Mammary epithelial cell (primary cell): ENCODE measurements at regions of chr21 and their contacts with region 1.

Region 1: DNA sequence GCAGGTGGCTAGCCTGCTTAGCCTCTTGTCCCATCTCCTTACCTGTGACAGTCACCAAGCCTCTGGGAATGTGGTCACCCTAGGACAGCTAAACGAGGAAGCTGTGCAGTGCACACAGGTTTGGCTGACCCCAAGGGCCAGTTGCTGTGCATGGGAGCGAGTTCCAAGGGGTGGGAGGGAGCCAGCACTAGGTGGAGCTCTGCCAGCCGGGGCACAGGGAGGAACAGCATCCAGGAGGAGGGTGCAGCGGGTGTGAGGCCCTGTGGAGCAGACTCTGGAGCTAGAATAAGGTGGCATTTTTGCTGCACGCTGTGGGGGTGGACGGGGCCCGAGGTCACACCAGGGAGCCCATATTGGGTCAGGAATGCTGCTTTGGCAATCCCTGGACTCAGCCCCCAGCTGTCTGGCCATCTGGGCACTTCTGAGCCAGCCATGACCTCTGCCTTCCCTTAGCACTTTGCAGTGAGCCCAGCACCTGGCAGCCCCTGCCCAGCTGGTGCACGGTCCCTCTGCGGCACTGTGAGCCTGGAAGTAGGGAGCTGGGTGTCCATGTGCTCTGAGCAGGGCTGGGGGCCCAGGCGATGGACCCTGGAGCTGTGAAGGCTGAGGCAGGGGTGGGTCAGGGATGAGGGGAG is 8.7 kb downstream of the PDXK start:
- DNase-seq: no peak
- H3K4me3 ChIP-seq: no peak overlapping the region
- H3K27ac ChIP-seq: peak overlapping the region; percentile 56
- H3K4me1 ChIP-seq: peaks cover 62% of the 10 kb centered on the region
- H3K27me3 ChIP-seq: no peaks in the 10 kb centered on the region
- CTCF ChIP-seq: peak; percentile 16 to 26

Region 2: DNA sequence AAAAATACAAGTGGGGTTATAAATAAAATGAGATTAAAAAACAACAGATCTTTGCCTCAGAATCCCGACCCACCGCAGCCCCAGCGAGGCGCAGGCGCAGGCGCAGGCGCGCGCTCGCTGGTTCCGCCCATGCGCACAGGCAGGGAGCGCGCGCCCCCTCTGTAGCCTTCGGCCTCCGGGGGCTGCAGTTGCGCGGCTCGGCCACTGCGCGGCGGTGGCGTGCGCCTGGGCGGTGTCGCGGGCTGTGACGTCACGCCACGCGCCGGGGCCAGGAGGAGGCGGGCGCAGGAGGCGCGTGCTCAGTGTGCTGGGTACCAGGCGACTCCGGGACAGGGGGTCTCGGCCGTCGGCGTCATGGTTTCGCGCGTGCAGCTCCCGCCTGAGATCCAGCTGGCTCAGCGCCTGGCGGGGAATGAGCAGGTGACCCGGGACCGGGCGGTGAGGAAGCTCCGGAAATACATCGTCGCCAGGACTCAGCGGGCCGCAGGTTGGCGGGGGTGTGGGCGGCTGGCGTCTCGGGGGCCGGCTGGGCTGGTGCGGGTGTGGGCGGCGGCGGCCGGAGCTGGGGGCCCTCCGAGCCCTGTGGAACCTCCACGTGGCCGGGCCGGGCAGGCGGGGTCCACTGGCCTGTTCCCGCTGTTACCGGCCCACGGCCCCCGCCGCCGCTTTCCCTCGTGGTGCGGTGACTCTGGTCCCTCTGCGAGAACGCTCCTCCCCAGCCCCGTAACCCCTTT is 61.8 kb after region 1 on chr21 and contains the start of gene RRP1:
- CTCF ChIA-PET with region 1: no interaction called
- dilution Hi-C with region 1: no loop called
- in situ Hi-C with region 1: no loop called
- intact Hi-C with region 1: loop called (anchors 1 kb)
- DNase-seq: peak; percentile 87
- H3K4me3 ChIP-seq: peak within 1 kb of the TSS; percentile 84 to 100 (median 87)
- H3K27ac ChIP-seq: peak within 1 kb of the TSS; percentile 68
- H3K4me1 ChIP-seq: peaks cover 8% of the 10 kb centered on the region
- H3K27me3 ChIP-seq: no peaks in the 10 kb centered on the region
- CTCF ChIP-seq: peak; percentile 78 to 92
- total RNA-seq, gene RRP1: 20.7 to 40.8 TPM